Lower leg skin (tissue), 4 donors: ENCODE measurements at regions of chr9 and their contacts with region 1.

Region 1: GRCh38 chr9:103904242-103904641 is 189.9 kb upstream of the SMC2 start:
- DNase-seq: no peak
- H3K4me3 ChIP-seq: no peak overlapping the region
- CTCF ChIP-seq: no peak
- POLR2A ChIP-seq: no peak

Region 2: GRCh38 chr9:103919605-103920209 is 15.5 kb after region 1 on chr9:
- intact Hi-C with region 1: loop called (anchors 1 kb)
- DNase-seq: no peak
- H3K4me3 ChIP-seq: no peak overlapping the region
- CTCF ChIP-seq: no peak
- POLR2A ChIP-seq: no peak

Region 3: GRCh38 chr9:104200456-104200994 is 296.3 kb after region 1 on chr9:
- intact Hi-C with region 1: no loop called
- DNase-seq: no peak
- H3K4me3 ChIP-seq: no peak overlapping the region
- CTCF ChIP-seq: no peak
- POLR2A ChIP-seq: no peak